ENCODE measurements at regions of chr5 and their contacts with region 1.

Region 1: GRCh38 chr5:115616472-115616871 is 9.4 kb downstream of the TMED7 start:
- DNase-seq: no peak
- H3K4me3 ChIP-seq: no peak overlapping the region
- CTCF ChIP-seq: no peak

Region 2: GRCh38 chr5:115601701-115602590 is 14.5 kb before region 1 on chr5 and contains the start of gene TICAM2:
- CTCF ChIA-PET with region 1: interaction called, 11 read pairs
- POLR2A ChIA-PET with region 1: interaction called, 8 read pairs
- DNase-seq: no peak
- H3K4me3 ChIP-seq: peak within 1 kb of the TSS; percentile 71
- CTCF ChIP-seq: peak; percentile 31